Esophagus muscularis mucosa (tissue), 4 donors: ENCODE measurements at regions of chr17 and their contacts with region 1.

Region 1: DNA sequence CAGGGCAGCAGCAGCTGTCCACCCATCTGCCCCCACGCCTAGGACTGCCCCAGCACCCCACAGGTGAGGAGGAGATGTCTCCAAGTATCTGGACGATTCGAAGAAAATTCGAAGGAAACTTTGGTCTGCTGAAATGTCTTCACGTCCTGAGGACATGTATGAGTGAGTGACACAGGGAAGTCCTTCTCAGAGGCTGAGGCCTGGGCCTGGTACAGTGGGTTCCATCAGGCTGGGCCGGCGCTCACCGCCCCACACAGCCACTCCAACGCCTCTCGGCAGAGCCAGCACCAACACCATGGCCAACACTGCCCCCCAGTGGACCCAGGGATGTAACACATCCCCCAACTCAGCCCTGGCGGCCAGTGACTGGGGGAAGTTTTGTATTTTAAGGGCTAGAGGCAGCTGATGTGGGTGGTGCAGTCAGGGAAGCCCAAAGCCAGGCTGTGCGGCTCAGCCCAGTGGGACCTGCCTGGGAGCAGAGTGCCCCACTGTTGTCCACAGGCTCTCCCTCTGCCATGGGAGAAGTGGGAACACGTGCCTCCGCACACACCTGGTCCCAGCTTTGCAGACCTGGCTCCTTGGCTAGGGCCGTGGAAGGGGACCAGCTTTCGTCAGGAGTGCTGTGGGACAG is 55.8 kb upstream of the FASN start:
- DNase-seq: peak; percentile 93
- H3K4me3 ChIP-seq: no peak overlapping the region
- H3K27ac ChIP-seq: no peak overlapping the region
- H3K4me1 ChIP-seq: peaks cover 0 to 4% (median 0%) of the 10 kb centered on the region in 4 donors
- H3K27me3 ChIP-seq: no peaks in the 10 kb centered on the region
- CTCF ChIP-seq: peak; percentile 75 to 95 (median 89)
- EP300 ChIP-seq: no peak
- POLR2A ChIP-seq: no peak

Region 2: GRCh38 chr17:81959362-81960129 is 194.3 kb before region 1 on chr17:
- intact Hi-C with region 1: loop called (anchors 10 kb)
- DNase-seq: no peak
- H3K4me3 ChIP-seq: peak overlapping the region; percentile 52 to 62 (median 54)
- H3K27ac ChIP-seq: no peak overlapping the region
- H3K4me1 ChIP-seq: peaks cover 16 to 33% (median 27%) of the 10 kb centered on the region in 4 donors
- H3K27me3 ChIP-seq: peaks cover 10 to 100% (median 39%) of the 10 kb centered on the region in 4 donors
- CTCF ChIP-seq: peak; percentile 73 to 97 (median 90)
- EP300 ChIP-seq: no peak
- POLR2A ChIP-seq: no peak

Region 3: GRCh38 chr17:82030470-82031302 is 123.2 kb before region 1 on chr17:
- intact Hi-C with region 1: loop called (anchors 2 kb)
- DNase-seq: peak; percentile 96
- H3K4me3 ChIP-seq: peak overlapping the region; percentile 53 to 60 (median 58)
- H3K27ac ChIP-seq: peak overlapping the region; percentile 12 to 66 (median 40)
- H3K4me1 ChIP-seq: peaks cover 19 to 31% (median 26%) of the 10 kb centered on the region in 4 donors
- H3K27me3 ChIP-seq: peaks cover 0 to 18% (median 6%) of the 10 kb centered on the region in 4 donors
- CTCF ChIP-seq: peak; percentile 91 to 97 (median 93)
- EP300 ChIP-seq: no peak
- POLR2A ChIP-seq: no peak

Region 4: DNA sequence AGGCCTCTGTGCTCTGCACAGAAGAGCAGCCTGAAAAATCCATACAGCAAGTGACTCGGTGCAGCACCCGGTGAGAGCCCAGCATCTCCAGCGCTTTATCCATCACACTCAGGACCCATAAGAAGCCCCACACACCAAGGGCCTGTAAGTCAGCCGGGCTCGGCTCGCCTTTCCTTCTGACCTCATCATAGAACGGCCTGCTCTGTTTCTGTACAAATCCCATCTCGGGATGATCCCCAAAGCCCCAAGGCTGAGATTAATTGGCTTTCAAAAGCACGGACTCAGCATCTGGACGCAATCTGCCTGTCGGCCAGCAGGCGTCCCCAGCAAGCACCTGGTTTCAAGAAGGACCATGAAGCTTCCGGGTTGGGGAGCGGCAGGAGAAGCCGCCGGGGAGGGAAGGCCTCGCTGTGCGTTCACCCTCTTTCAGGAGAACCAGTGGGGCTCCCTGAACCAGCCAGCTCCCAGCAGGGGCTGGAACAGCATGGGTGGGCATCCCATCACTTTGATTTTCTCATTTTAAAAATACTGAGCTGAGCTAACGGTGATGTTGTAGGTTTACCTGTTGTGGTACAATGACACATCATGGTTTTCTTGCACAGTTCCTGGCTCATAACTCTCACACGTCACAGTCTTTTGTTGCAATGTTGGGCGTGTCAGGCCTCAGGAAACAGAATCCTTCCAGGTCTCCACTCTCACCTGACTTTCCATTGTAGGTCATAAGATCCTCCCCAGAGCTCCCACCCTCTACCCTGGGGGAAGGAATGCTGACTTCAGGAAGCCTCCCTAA is 52.1 kb after region 1 on chr17:
- intact Hi-C with region 1: no loop called
- DNase-seq: peak; percentile 94
- H3K4me3 ChIP-seq: peak overlapping the region in 3 of 4 donors; percentile 11 to 16 (median 15)
- H3K27ac ChIP-seq: peak overlapping the region; percentile 53 to 70 (median 62)
- H3K4me1 ChIP-seq: peaks cover 4 to 19% (median 15%) of the 10 kb centered on the region in 4 donors
- H3K27me3 ChIP-seq: no peaks in the 10 kb centered on the region
- CTCF ChIP-seq: peak; percentile 92 to 95 (median 95)
- EP300 ChIP-seq: no peak
- POLR2A ChIP-seq: no peak